ENCODE measurements at regions of chr19 and their contacts with region 1.

Region 1: GRCh38 chr19:771332-771785 is 20.4 kb downstream of the MISP start:
- DNase-seq: peak; percentile 72 to 84 (median 78)
- ATAC-seq: peak; percentile 92
- H3K4me3 ChIP-seq: no peak overlapping the region
- H3K27ac ChIP-seq: peak overlapping the region; percentile 30; the same call in 1 of the 3 replicates
- H3K4me1 ChIP-seq: peaks cover 0 to 39% of the 10 kb centered on the region in 2 experiments; a peak in 3 of 5 replicates
- H3K27me3 ChIP-seq: no peaks in the 10 kb centered on the region
- CTCF ChIP-seq: peak; percentile 77 to 84 (median 83)
- EP300 ChIP-seq: no peak
- POLR2A ChIP-seq: no peak
- RAD21 ChIP-seq: peak; percentile 84 to 88

Region 2: DNA sequence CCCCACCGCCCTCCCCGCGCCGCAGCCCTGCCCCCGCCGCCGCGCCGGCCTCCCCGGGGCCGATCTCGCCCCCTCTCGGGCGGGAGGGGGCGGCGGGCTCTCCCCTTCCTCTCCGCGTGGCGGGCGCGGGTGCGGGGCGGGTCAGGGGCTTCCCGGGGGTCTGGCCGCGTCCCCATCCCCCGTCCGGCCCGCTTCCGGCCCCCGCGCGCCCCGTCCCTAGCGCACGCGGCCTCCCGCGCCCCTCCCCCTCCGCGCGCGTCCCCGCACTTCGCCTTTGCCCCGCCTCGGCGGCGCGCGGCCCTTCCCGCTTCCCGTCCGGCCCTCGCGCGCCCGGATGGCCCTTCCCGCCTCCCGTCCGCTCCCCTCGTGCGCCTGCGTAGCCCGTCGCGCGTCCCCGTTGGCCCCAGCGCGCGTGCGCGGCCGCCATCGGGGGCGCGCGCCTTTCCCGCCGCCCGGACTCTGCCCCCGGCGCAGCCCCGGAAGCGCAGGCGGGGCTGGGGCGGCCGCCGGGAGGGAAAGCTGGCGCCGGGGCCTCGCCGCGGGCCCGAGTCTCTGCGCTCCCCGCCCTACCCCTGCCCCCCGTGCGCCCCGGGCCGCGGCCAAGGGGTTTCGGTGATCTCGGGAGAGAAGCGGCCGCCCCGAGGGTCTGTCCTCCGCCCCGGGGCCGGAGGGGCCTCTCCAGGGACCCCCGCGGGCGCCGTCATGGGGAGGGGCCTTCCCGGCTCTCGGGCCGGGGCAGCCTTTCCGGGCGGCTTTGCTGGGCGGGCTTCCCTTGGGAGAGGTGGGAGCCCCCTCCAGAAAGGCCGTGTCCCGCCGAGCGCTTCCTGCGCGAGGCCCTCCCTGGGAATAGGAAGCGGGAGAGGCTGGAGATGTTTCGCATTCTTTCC is 26.4 kb after region 1 on chr19:
- CTCF ChIA-PET with region 1: interaction called, 3 read pairs
- POLR2A ChIA-PET with region 1: interaction called, 4 read pairs
- in situ Hi-C with region 1: no loop called
- intact Hi-C with region 1: loop called (anchors 1 kb)
- DNase-seq: peak; percentile 88 to 97 (median 92)
- ATAC-seq: peak; percentile 20
- H3K4me3 ChIP-seq: peak overlapping the region; percentile 99
- H3K27ac ChIP-seq: peak overlapping the region; percentile 98
- H3K4me1 ChIP-seq: peaks cover 26 to 83% of the 10 kb centered on the region in 2 experiments
- H3K27me3 ChIP-seq: no peaks in the 10 kb centered on the region
- CTCF ChIP-seq: no peak
- EP300 ChIP-seq: no peak
- POLR2A ChIP-seq: no peak
- RAD21 ChIP-seq: no peak

Region 3: DNA sequence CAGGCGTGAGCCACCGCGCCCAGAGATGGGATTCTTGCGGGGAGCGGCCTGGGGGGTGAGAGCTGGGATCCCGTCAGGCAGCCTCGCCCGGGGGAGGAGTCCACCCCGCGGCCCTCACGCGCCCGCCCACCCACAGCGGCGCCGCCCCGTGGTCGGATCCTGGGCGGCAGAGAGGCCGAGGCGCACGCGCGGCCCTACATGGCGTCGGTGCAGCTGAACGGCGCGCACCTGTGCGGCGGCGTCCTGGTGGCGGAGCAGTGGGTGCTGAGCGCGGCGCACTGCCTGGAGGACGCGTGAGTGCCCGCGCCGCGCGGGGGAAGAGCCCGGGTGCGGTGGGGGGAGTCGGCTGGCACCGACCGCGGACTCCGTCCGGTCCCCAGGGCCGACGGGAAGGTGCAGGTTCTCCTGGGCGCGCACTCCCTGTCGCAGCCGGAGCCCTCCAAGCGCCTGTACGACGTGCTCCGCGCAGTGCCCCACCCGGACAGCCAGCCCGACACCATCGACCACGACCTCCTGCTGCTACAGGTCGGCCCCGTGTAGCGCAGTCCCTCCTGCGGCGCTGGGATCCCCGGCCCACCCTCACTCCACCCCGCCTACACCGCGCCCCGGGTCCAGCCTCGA is 89.2 kb after region 1 on chr19:
- CTCF ChIA-PET with region 1: interaction called, 8 read pairs
- POLR2A ChIA-PET with region 1: no interaction called
- in situ Hi-C with region 1: loop called (anchors 5 kb)
- intact Hi-C with region 1: loop called (anchors 2 kb)
- DNase-seq: peak; percentile 90 to 94 (median 92)
- ATAC-seq: peak; percentile 78
- H3K4me3 ChIP-seq: peak overlapping the region; percentile 62
- H3K27ac ChIP-seq: peak overlapping the region; percentile 82
- H3K4me1 ChIP-seq: peaks cover 25 to 63% of the 10 kb centered on the region in 2 experiments
- H3K27me3 ChIP-seq: no peaks in the 10 kb centered on the region
- CTCF ChIP-seq: peak in 2 of 3 experiments; percentile 45 to 55; a peak in 4 of 6 replicates
- EP300 ChIP-seq: no peak
- POLR2A ChIP-seq: peak; percentile 81
- RAD21 ChIP-seq: peak; percentile 30; a peak in 2 of 4 replicates

Region 4: GRCh38 chr19:913080-913748 is 141.9 kb after region 1 on chr19 and contains the start of gene R3HDM4:
- CTCF ChIA-PET with region 1: interaction called, 74 read pairs
- POLR2A ChIA-PET with region 1: no interaction called
- in situ Hi-C with region 1: no loop called
- intact Hi-C with region 1: loop called (anchors 1 kb)
- DNase-seq: peak; percentile 69 to 84 (median 76)
- ATAC-seq: peak; percentile 36
- H3K4me3 ChIP-seq: peak within 1 kb of the TSS; percentile 96
- H3K27ac ChIP-seq: peak within 1 kb of the TSS; percentile 91
- H3K4me1 ChIP-seq: peaks cover 13 to 72% of the 10 kb centered on the region in 2 experiments
- H3K27me3 ChIP-seq: no peaks in the 10 kb centered on the region
- CTCF ChIP-seq: no peak
- EP300 ChIP-seq: no peak
- POLR2A ChIP-seq: 0 out of 2 replicates have a peak, but pooled peaks have one; percentile 35
- RAD21 ChIP-seq: no peak
- polyA plus RNA-seq, gene R3HDM4: 3.2 to 5.6 TPM

Region 5: GRCh38 chr19:925526-926322 is 154.4 kb after region 1 on chr19 and contains the start of gene ARID3A:
- CTCF ChIA-PET with region 1: interaction called, 74 read pairs
- POLR2A ChIA-PET with region 1: no interaction called
- in situ Hi-C with region 1: loop called (anchors 5 kb)
- intact Hi-C with region 1: loop called (anchors 1 kb)
- DNase-seq: peak; percentile 77 to 94 (median 87)
- ATAC-seq: peak; percentile 83
- H3K4me3 ChIP-seq: peak within 1 kb of the TSS; percentile 99
- H3K27ac ChIP-seq: peak within 1 kb of the TSS; percentile 97
- H3K4me1 ChIP-seq: peaks cover 8 to 71% of the 10 kb centered on the region in 2 experiments; a peak in 4 of 5 replicates
- H3K27me3 ChIP-seq: no peaks in the 10 kb centered on the region
- CTCF ChIP-seq: no peak
- EP300 ChIP-seq: no peak
- POLR2A ChIP-seq: no peak
- RAD21 ChIP-seq: no peak
- polyA plus RNA-seq, gene ARID3A: 1.4 to 2.0 TPM

Region 6: GRCh38 chr19:984165-984967 is 213.0 kb after region 1 on chr19 and contains the start of gene WDR18:
- CTCF ChIA-PET with region 1: interaction called, 3 read pairs
- POLR2A ChIA-PET with region 1: no interaction called
- in situ Hi-C with region 1: no loop called
- intact Hi-C with region 1: loop called (anchors 5 kb)
- DNase-seq: peak; percentile 94 to 97 (median 95)
- ATAC-seq: peak; percentile 78
- H3K4me3 ChIP-seq: peak within 1 kb of the TSS; percentile 100
- H3K27ac ChIP-seq: peak within 1 kb of the TSS; percentile 91
- H3K4me1 ChIP-seq: peaks cover 24 to 78% of the 10 kb centered on the region in 2 experiments
- H3K27me3 ChIP-seq: no peaks in the 10 kb centered on the region
- CTCF ChIP-seq: no peak
- EP300 ChIP-seq: no peak
- POLR2A ChIP-seq: peak; percentile 78; the same call in 1 of the 2 replicates
- RAD21 ChIP-seq: no peak
- polyA plus RNA-seq, gene WDR18: 0.65 to 1.1 TPM

Region 7: GRCh38 chr19:1249298-1249989 is 478.1 kb after region 1 on chr19:
- CTCF ChIA-PET with region 1: no interaction called
- POLR2A ChIA-PET with region 1: no interaction called
- in situ Hi-C with region 1: loop called (anchors 25 kb)
- intact Hi-C with region 1: no loop called
- DNase-seq: peak; percentile 70 to 97 (median 82)
- ATAC-seq: peak; percentile 45
- H3K4me3 ChIP-seq: peak overlapping the region; percentile 93
- H3K27ac ChIP-seq: peak overlapping the region; percentile 99
- H3K4me1 ChIP-seq: peaks cover 41 to 95% of the 10 kb centered on the region in 2 experiments
- H3K27me3 ChIP-seq: no peaks in the 10 kb centered on the region
- CTCF ChIP-seq: no peak
- EP300 ChIP-seq: no peak
- POLR2A ChIP-seq: peak; percentile 76
- RAD21 ChIP-seq: no peak